Stomach (tissue), 19 donors: ENCODE measurements at regions of chrX and their contacts with region 1.

Region 1: DNA sequence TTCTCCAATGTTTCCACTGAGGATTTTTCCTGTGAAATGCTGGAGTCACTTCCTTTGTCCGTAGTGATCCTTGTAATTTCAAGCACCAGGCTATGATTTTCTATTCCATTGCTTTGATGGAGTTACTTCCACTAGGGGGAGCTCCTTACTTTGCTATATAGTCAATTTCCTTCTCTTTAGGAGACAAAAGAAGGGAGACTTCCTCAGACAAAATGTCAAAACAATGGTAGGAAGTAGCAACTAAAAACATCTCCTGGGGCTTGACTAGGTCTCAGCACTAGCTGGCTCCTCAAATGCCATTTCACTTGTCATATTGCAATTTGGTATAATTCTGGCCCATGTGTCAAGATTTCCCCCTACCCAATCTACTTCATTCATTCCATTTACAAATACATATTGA is 24.1 kb downstream of the ZCCHC12 start:
- DNase-seq: peak in 1 of 2 donors; percentile 77
- H3K4me3 ChIP-seq: no peak overlapping the region
- H3K27ac ChIP-seq: no peak overlapping the region
- H3K4me1 ChIP-seq: no peaks in the 10 kb centered on the region
- H3K27me3 ChIP-seq: no peaks in the 10 kb centered on the region
- CTCF ChIP-seq: peak in 5 of 7 experiments; percentile 27 to 65 (median 46)
- EP300 ChIP-seq: no peak
- POLR2A ChIP-seq: no peak

Region 2: GRCh38 chrX:118745570-118745969 is 102.1 kb before region 1 on chrX:
- intact Hi-C with region 1: no loop called
- DNase-seq: no peak
- H3K4me3 ChIP-seq: no peak overlapping the region
- H3K27ac ChIP-seq: no peak overlapping the region
- H3K4me1 ChIP-seq: peaks cover 0 to 17% (median 4%) of the 10 kb centered on the region in 4 donors
- H3K27me3 ChIP-seq: no peaks in the 10 kb centered on the region
- CTCF ChIP-seq: no peak
- EP300 ChIP-seq: no peak
- POLR2A ChIP-seq: no peak

Region 3: GRCh38 chrX:119004920-119005524 is 157.3 kb after region 1 on chrX:
- intact Hi-C with region 1: loop called (anchors 10 kb)
- DNase-seq: peak; percentile 64 to 73
- H3K4me3 ChIP-seq: no peak overlapping the region
- H3K27ac ChIP-seq: no peak overlapping the region
- H3K4me1 ChIP-seq: peaks cover 0 to 5% (median 0%) of the 10 kb centered on the region in 4 donors
- H3K27me3 ChIP-seq: no peaks in the 10 kb centered on the region
- CTCF ChIP-seq: peak in 5 of 7 experiments; percentile 37 to 93 (median 61)
- EP300 ChIP-seq: no peak
- POLR2A ChIP-seq: no peak

Region 4: DNA sequence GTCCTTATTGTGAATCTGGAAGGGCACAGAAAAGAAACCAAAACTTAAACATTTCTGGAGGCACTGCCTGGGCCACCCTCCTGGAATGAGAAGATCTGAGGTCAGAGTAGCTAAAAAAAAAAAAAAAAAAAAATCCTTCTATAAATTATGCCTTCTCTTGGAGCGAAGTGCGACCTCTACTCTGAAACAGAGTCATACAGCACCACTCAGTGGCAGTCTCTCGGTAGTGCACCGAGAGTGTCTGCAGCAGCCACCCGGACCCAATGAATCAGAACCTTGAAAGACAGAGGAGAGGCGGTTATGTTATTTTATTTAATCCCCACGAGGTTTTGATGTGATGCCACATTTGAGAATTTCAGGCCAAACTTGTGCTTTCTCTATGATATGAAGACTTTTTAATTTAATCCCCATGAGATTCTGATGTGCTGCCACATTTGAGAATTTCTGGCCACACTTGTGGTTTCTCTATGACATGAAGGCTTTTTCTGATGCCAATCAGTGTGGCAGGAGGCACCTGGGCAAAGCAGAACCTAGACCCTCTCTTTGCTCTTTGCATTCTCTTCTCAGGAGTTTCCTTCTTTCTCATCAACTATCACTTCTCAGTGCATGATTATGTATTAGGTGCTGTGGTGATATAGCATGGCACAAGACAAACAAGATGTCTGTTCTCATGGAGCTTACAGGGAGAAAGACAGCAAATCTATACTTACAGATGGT is 219.5 kb after region 1 on chrX:
- intact Hi-C with region 1: loop called (anchors 5 kb)
- DNase-seq: peak; percentile 57 to 78
- H3K4me3 ChIP-seq: no peak overlapping the region
- H3K27ac ChIP-seq: no peak overlapping the region
- H3K4me1 ChIP-seq: peaks cover 0 to 4% (median 0%) of the 10 kb centered on the region in 4 donors
- H3K27me3 ChIP-seq: peaks cover 0 to 17% (median 0%) of the 10 kb centered on the region in 3 donors
- CTCF ChIP-seq: peak in 5 of 7 experiments; percentile 36 to 58 (median 41)
- EP300 ChIP-seq: no peak
- POLR2A ChIP-seq: no peak